ENCODE measurements at regions of chr10 and their contacts with region 1.

Region 1: GRCh38 chr10:17023386-17024298 is 106.0 kb downstream of the CUBN start:
- DNase-seq: peak; percentile 86
- H3K4me3 Mint-ChIP-seq: peak overlapping the region; percentile 50
- H3K27ac Mint-ChIP-seq: peak overlapping the region; percentile 92
- H3K4me1 Mint-ChIP-seq: peaks cover 55% of the 10 kb centered on the region
- H3K27me3 Mint-ChIP-seq: peaks cover 3% of the 10 kb centered on the region

Region 2: GRCh38 chr10:16732376-16732775 is 291.3 kb before region 1 on chr10:
- CTCF ChIA-PET with region 1: no interaction called
- POLR2A ChIA-PET with region 1: no interaction called
- intact Hi-C with region 1: no loop called
- DNase-seq: no peak
- H3K4me3 Mint-ChIP-seq: no peak overlapping the region
- H3K27ac Mint-ChIP-seq: no peak overlapping the region
- H3K4me1 Mint-ChIP-seq: peaks cover 18% of the 10 kb centered on the region
- H3K27me3 Mint-ChIP-seq: no peaks in the 10 kb centered on the region

Region 3: GRCh38 chr10:16787361-16787791 is 236.3 kb before region 1 on chr10:
- CTCF ChIA-PET with region 1: no interaction called
- POLR2A ChIA-PET with region 1: no interaction called
- intact Hi-C with region 1: loop called (anchors 1 kb)
- DNase-seq: peak; percentile 81
- H3K4me3 Mint-ChIP-seq: peak overlapping the region; percentile 59
- H3K27ac Mint-ChIP-seq: peak overlapping the region; percentile 86
- H3K4me1 Mint-ChIP-seq: peaks cover 27% of the 10 kb centered on the region
- H3K27me3 Mint-ChIP-seq: no peaks in the 10 kb centered on the region

Region 4: GRCh38 chr10:16891375-16892313 is 132.0 kb before region 1 on chr10:
- CTCF ChIA-PET with region 1: no interaction called
- POLR2A ChIA-PET with region 1: no interaction called
- intact Hi-C with region 1: loop called (anchors 1 kb)
- DNase-seq: peak; percentile 69
- H3K4me3 Mint-ChIP-seq: peak overlapping the region; percentile 65
- H3K27ac Mint-ChIP-seq: peak overlapping the region; percentile 63
- H3K4me1 Mint-ChIP-seq: peaks cover 11% of the 10 kb centered on the region
- H3K27me3 Mint-ChIP-seq: no peaks in the 10 kb centered on the region

Region 5: GRCh38 chr10:17001961-17002749 is 21.5 kb before region 1 on chr10:
- CTCF ChIA-PET with region 1: interaction called, 10 read pairs
- POLR2A ChIA-PET with region 1: interaction called, 8 read pairs
- intact Hi-C with region 1: loop called (anchors 1 kb)
- DNase-seq: peak; percentile 43
- H3K4me3 Mint-ChIP-seq: no peak overlapping the region
- H3K27ac Mint-ChIP-seq: peak overlapping the region; percentile 63
- H3K4me1 Mint-ChIP-seq: peaks cover 43% of the 10 kb centered on the region
- H3K27me3 Mint-ChIP-seq: peaks cover 13% of the 10 kb centered on the region

Region 6: GRCh38 chr10:17075533-17076359 is 52.1 kb after region 1 on chr10:
- CTCF ChIA-PET with region 1: no interaction called
- POLR2A ChIA-PET with region 1: no interaction called
- intact Hi-C with region 1: loop called (anchors 2 kb)
- DNase-seq: no peak
- H3K4me3 Mint-ChIP-seq: no peak overlapping the region
- H3K27ac Mint-ChIP-seq: no peak overlapping the region
- H3K4me1 Mint-ChIP-seq: peaks cover 18% of the 10 kb centered on the region
- H3K27me3 Mint-ChIP-seq: no peaks in the 10 kb centered on the region

Region 7: DNA sequence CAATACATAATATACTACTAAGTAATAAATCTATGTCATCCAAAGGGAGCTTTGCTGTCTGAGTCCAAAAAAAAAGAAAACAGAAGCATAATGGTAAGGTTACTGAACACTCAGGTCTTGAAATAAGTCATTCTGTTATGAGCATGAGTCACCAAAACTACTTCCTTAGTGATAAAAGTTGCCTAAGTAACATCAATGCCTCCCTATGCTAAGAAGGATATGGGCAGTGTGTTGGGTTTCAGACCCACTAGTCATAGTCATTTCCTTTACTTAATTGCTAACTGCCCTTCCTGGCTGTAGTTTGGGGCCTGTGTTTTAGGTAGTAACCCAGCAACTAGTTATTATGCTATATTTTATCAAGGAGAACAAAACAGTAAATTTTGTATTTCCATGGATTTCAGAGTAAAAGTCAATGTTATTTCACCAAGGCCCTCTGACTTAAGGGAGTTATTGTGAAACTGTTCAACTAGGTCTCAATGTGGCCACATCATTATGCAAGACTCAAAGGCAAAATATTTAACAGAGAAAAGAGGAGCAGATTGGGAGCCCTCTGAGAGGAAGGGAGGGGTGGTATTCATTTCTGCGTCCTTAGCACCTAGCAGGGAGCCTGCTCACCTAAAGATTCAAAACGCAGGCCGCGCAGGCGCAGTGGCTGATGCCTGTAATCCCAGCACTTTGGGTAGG is 192.7 kb after region 1 on chr10:
- CTCF ChIA-PET with region 1: no interaction called
- POLR2A ChIA-PET with region 1: no interaction called
- intact Hi-C with region 1: loop called (anchors 1 kb)
- DNase-seq: peak; percentile 35
- H3K4me3 Mint-ChIP-seq: peak overlapping the region; percentile 7
- H3K27ac Mint-ChIP-seq: peak overlapping the region; percentile 88
- H3K4me1 Mint-ChIP-seq: peaks cover 44% of the 10 kb centered on the region
- H3K27me3 Mint-ChIP-seq: no peaks in the 10 kb centered on the region

Region 8: GRCh38 chr10:17643755-17644484 is 620.3 kb after region 1 on chr10 and contains the start of gene STAM:
- CTCF ChIA-PET with region 1: no interaction called
- POLR2A ChIA-PET with region 1: no interaction called
- intact Hi-C with region 1: loop called (anchors 1 kb)
- DNase-seq: peak; percentile 94
- H3K4me3 Mint-ChIP-seq: peak within 1 kb of the TSS; percentile 95
- H3K27ac Mint-ChIP-seq: peak within 1 kb of the TSS; percentile 99
- H3K4me1 Mint-ChIP-seq: peaks cover 53% of the 10 kb centered on the region
- H3K27me3 Mint-ChIP-seq: no peaks in the 10 kb centered on the region
- total RNA-seq, gene STAM: 24.5 to 29.9 TPM